HepG2 (cell line): ENCODE measurements at regions of chrX and their contacts with region 1.

Region 1: DNA sequence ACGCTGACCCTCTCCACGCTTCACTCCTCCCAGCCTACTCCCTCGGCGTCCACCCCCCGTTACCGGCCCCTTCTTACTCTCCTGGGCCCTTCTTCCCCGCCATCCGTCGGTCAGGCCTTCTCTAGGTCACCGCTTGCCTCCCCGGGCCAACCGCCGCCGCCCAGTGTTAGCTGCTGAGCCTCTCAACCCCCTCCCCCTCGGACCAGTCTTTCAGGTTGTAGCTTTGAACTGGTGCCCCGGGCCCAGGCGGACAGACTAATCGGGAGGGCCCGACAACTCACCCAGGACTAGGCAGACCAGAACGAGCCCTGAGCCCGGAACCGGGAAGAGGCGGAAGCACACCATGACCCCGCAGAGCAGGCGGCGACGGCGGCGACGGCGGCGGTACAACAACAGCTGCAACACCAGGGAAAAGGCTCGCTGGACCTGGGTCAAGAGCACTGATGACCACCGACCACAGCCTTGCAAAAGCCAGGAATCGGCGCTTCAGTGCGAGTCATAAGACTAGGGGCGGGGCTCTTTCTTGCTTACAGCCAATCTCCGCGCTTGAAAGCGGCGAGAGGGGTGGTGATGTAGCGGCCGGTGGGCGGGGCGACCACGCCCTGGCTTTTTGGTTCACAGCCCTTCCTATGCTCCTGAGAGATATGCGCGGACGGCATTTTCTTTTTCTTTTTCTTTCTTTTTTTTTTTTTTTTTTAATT is at the start of gene LAMP2:
- DNase-seq: peak; percentile 86
- ATAC-seq: peak; percentile 94
- H3K4me3 ChIP-seq: peak within 1 kb of the TSS; percentile 80 to 89 (median 81)
- H3K27ac ChIP-seq: peak within 1 kb of the TSS; percentile 90
- H3K4me1 ChIP-seq: peaks cover 33% of the 10 kb centered on the region
- H3K27me3 ChIP-seq: no peaks in the 10 kb centered on the region
- CTCF ChIP-seq: no peak
- EP300 ChIP-seq: no peak
- POLR2A ChIP-seq: peak; percentile 87 to 97
- RAD21 ChIP-seq: no peak
- total RNA-seq, gene LAMP2: 63.0 and 127 TPM in 2 replicates

Region 2: DNA sequence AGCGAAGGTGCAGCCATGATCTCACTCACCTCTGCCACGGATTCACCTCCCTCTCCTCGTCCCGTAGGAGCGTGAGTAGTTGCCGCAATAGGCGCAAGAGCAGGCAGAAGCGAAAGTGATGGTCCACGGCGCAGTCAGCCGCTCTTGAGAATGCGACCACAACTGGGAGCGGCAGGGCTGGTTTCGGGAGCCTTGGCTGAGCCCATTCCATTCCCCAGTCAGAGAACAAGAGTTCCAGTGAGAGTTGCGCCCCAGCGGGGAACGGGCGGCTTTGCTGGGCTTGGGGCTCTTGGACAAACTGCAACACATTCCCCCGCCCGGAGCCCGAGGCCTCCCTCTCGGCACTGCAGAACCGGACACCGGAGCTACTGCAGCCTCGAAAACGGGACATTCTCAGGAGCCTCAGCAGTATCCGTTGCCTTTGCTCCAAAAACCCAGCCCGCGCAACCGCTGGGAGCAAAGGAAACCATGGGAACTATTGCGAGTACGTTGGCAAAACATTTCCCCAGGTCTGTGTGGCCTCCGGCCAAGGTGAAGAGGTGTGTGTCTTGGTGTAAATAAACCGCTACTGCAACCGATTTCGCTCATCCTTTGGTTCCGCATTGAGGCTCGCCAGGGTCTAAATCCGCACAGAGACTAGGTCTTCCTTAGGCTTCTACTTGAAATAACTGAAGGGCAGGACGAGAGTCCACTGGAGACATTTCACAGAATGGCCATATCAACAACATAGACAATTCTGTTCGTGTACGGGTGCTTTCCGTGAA is 224.1 kb before region 1 on chrX:
- CTCF ChIA-PET with region 1: no interaction called
- POLR2A ChIA-PET with region 1: no interaction called
- in situ Hi-C with region 1: loop called (anchors 25 kb)
- intact Hi-C with region 1: no loop called
- DNase-seq: peak; percentile 71
- ATAC-seq: peak; percentile 93
- H3K4me3 ChIP-seq: peak overlapping the region; percentile 80 to 82 (median 81)
- H3K27ac ChIP-seq: peak overlapping the region; percentile 96
- H3K4me1 ChIP-seq: peaks cover 18% of the 10 kb centered on the region
- H3K27me3 ChIP-seq: no peaks in the 10 kb centered on the region; a peak in 1 of 5 replicates
- CTCF ChIP-seq: no peak
- EP300 ChIP-seq: 0 out of 4 replicates have a peak, but pooled peaks have one; percentile 23 to 27
- POLR2A ChIP-seq: peak; percentile 47 to 62; a peak in 3 of 4 replicates
- RAD21 ChIP-seq: no peak

Region 3: GRCh38 chrX:120310861-120311726 is 157.9 kb before region 1 on chrX and contains the start of gene TMEM255A:
- CTCF ChIA-PET with region 1: no interaction called
- POLR2A ChIA-PET with region 1: no interaction called
- in situ Hi-C with region 1: no loop called
- intact Hi-C with region 1: loop called (anchors 10 kb)
- DNase-seq: no peak
- ATAC-seq: peak; percentile 41
- H3K4me3 ChIP-seq: peak within 1 kb of the TSS in 2 of 3 experiments; percentile 28 to 59; a peak in 3 of 6 replicates
- H3K27ac ChIP-seq: no peak within 1 kb of the TSS
- H3K4me1 ChIP-seq: peaks cover 15% of the 10 kb centered on the region; the same call in 1 of the 2 replicates
- H3K27me3 ChIP-seq: peaks cover 1 to 16% of the 10 kb centered on the region in 2 experiments; a peak in 1 of 5 replicates
- CTCF ChIP-seq: no peak
- EP300 ChIP-seq: no peak
- POLR2A ChIP-seq: no peak
- RAD21 ChIP-seq: no peak
- total RNA-seq, gene TMEM255A: 0.40 and 0.56 TPM in 2 replicates

Region 4: DNA sequence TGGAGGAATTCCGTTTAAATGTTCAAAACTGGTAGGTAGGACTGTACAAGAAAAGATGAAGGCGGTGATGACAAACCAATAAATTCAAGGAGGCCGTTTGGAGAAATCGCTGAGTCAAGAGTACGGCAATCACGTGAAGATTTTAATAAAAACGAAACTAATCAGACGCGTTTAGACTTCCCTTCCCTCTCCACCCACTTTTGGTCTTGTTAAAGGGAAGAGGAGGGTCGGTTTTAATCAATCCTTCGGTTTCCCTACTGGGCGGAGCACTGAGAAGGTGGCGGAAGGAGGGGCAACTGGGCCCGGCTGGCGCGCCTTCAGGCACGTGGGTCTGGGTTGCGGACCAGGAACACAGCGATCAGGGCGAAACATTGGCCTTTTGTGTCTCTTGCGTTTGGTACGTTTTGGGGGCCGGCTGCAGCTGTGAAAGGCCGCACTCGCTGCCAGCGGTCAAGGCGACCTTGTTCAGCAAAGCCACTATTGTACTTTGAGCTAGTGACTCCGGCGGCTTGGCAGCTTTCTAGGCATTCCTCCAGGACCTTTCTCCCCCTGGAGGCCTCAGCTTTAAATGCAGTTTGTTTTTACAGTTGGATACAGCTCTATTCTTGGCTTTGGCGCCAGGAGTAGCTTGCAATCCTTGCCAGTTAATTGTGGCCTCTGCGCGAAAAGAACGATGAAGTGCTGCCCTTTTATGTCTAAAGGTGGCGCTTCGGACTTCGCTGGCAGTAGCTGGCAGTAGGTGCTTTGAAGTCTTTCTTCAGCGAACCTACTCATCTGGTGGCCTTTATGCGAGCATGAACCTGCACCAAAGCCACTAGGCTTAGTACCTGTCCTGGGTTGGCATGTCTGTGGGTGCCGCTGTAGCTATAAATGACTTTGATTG is 16.9 kb after region 1 on chrX:
- CTCF ChIA-PET with region 1: no interaction called
- POLR2A ChIA-PET with region 1: interaction called, 26 read pairs
- in situ Hi-C with region 1: no loop called
- intact Hi-C with region 1: loop called (anchors 2 kb)
- DNase-seq: peak; percentile 94
- ATAC-seq: peak; percentile 89
- H3K4me3 ChIP-seq: peak overlapping the region in 2 of 3 experiments; percentile 38 to 55; a peak in 5 of 6 replicates
- H3K27ac ChIP-seq: peak overlapping the region; percentile 91
- H3K4me1 ChIP-seq: peaks cover 29% of the 10 kb centered on the region
- H3K27me3 ChIP-seq: no peaks in the 10 kb centered on the region
- CTCF ChIP-seq: peak; percentile 69
- EP300 ChIP-seq: peak in 1 of 2 experiments; percentile 44; a peak in 1 of 4 replicates
- POLR2A ChIP-seq: peak; percentile 35 to 43; a peak in 2 of 4 replicates
- RAD21 ChIP-seq: 0 out of 2 replicates have a peak, but pooled peaks have one; percentile 14

Region 5: GRCh38 chrX:120638619-120639018 is 169.6 kb after region 1 on chrX:
- CTCF ChIA-PET with region 1: no interaction called
- POLR2A ChIA-PET with region 1: no interaction called
- in situ Hi-C with region 1: no loop called
- intact Hi-C with region 1: no loop called
- DNase-seq: no peak
- ATAC-seq: no peak
- H3K4me3 ChIP-seq: no peak overlapping the region
- H3K27ac ChIP-seq: no peak overlapping the region
- H3K4me1 ChIP-seq: no peaks in the 10 kb centered on the region
- H3K27me3 ChIP-seq: no peaks in the 10 kb centered on the region
- CTCF ChIP-seq: no peak
- EP300 ChIP-seq: no peak
- POLR2A ChIP-seq: no peak
- RAD21 ChIP-seq: no peak